IMR-90 (cell line): ENCODE measurements at regions of chr20 and their contacts with region 1.

Region 1: DNA sequence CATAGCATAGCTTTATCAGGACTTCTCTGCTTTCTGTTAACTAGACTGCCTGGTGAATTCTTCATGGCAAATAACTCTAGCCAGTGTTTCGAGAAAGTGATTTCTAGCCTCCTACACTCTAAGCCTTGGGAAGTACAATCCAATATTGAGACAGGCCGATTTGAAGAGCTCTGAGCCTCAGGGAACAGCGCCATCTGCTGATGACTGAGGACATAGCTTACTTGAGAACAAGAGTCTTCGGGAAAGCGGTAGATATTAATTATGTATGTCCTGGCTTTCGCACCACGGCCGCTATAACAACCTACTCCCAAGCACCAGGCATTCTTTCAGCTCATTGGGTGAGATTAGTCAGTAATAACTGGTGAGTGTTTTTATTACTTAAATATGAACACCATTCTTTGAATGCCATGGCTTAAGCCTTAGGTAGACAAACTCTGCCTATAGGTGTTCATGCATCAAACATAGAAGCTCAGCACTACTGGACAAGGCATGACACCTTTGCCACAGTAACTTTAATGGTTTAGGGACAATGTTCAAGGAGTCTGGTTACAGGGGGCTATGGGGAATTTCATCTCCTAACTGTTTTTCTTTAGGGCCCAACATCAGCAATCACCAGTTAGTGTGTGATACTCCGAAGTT is 518.6 kb downstream of the BMP2 start:
- DNase-seq: peak; percentile 75
- ATAC-seq: peak; percentile 80
- H3K4me3 ChIP-seq: no peak overlapping the region
- H3K27ac ChIP-seq: no peak overlapping the region
- H3K4me1 ChIP-seq: no peaks in the 10 kb centered on the region
- H3K27me3 ChIP-seq: no peaks in the 10 kb centered on the region
- CTCF ChIP-seq: peak; percentile 78
- POLR2A ChIP-seq: no peak
- RAD21 ChIP-seq: peak; percentile 66

Region 2: GRCh38 chr20:6142348-6142993 is 1143.6 kb before region 1 on chr20:
- CTCF ChIA-PET with region 1: interaction called, 3 read pairs
- POLR2A ChIA-PET with region 1: no interaction called
- dilution Hi-C with region 1: no loop called
- in situ Hi-C with region 1: loop called (anchors 10 kb)
- intact Hi-C with region 1: loop called (anchors 1 kb)
- DNase-seq: peak; percentile 65
- ATAC-seq: peak; percentile 91
- H3K4me3 ChIP-seq: no peak overlapping the region
- H3K27ac ChIP-seq: no peak overlapping the region
- H3K4me1 ChIP-seq: no peaks in the 10 kb centered on the region
- H3K27me3 ChIP-seq: peaks cover 2% of the 10 kb centered on the region; the same call in 1 of the 2 replicates
- CTCF ChIP-seq: peak; percentile 84
- POLR2A ChIP-seq: no peak
- RAD21 ChIP-seq: peak; percentile 83

Region 3: GRCh38 chr20:6583134-6583738 is 702.8 kb before region 1 on chr20:
- CTCF ChIA-PET with region 1: no interaction called
- POLR2A ChIA-PET with region 1: no interaction called
- dilution Hi-C with region 1: no loop called
- in situ Hi-C with region 1: no loop called
- intact Hi-C with region 1: loop called (anchors 5 kb)
- DNase-seq: peak; percentile 55
- ATAC-seq: peak; percentile 93
- H3K4me3 ChIP-seq: no peak overlapping the region
- H3K27ac ChIP-seq: no peak overlapping the region
- H3K4me1 ChIP-seq: peaks cover 6% of the 10 kb centered on the region
- H3K27me3 ChIP-seq: no peaks in the 10 kb centered on the region
- CTCF ChIP-seq: peak; percentile 71
- POLR2A ChIP-seq: no peak
- RAD21 ChIP-seq: peak; percentile 68

Region 4: GRCh38 chr20:6636209-6637159 is 649.6 kb before region 1 on chr20:
- CTCF ChIA-PET with region 1: no interaction called
- POLR2A ChIA-PET with region 1: no interaction called
- dilution Hi-C with region 1: no loop called
- in situ Hi-C with region 1: no loop called
- intact Hi-C with region 1: loop called (anchors 5 kb)
- DNase-seq: peak; percentile 69
- ATAC-seq: peak; percentile 87
- H3K4me3 ChIP-seq: no peak overlapping the region
- H3K27ac ChIP-seq: no peak overlapping the region
- H3K4me1 ChIP-seq: no peaks in the 10 kb centered on the region
- H3K27me3 ChIP-seq: peaks cover 8% of the 10 kb centered on the region
- CTCF ChIP-seq: peak; percentile 66
- POLR2A ChIP-seq: no peak
- RAD21 ChIP-seq: peak; percentile 64

Region 5: DNA sequence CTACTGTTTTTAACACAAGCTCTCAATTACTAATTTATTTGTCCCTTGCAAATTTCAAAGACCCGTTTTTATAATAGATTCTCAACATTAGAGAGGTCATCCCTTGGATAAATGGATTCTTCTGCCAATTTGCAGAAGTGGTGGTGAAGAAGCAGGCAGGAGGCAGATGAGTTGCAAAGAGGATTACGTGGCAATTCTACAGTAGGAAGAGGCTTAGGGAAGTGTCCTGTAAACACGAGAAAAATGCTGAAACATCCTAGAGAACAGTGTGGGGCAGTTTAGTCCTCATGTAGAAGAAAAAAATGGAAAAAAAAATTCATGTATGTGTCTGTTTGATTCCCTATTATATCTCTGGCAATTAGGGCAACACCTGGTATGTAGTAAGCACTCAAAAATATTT is 430.9 kb before region 1 on chr20:
- CTCF ChIA-PET with region 1: no interaction called
- POLR2A ChIA-PET with region 1: no interaction called
- dilution Hi-C with region 1: no loop called
- in situ Hi-C with region 1: no loop called
- intact Hi-C with region 1: no loop called
- DNase-seq: no peak
- ATAC-seq: no peak
- H3K4me3 ChIP-seq: no peak overlapping the region
- H3K27ac ChIP-seq: no peak overlapping the region
- H3K4me1 ChIP-seq: no peaks in the 10 kb centered on the region
- H3K27me3 ChIP-seq: no peaks in the 10 kb centered on the region
- CTCF ChIP-seq: no peak
- POLR2A ChIP-seq: no peak
- RAD21 ChIP-seq: no peak

Region 6: GRCh38 chr20:7272512-7272911 is 13.5 kb before region 1 on chr20:
- CTCF ChIA-PET with region 1: no interaction called
- POLR2A ChIA-PET with region 1: no interaction called
- dilution Hi-C with region 1: no loop called
- in situ Hi-C with region 1: no loop called
- intact Hi-C with region 1: no loop called
- DNase-seq: no peak
- ATAC-seq: no peak
- H3K4me3 ChIP-seq: no peak overlapping the region
- H3K27ac ChIP-seq: no peak overlapping the region
- H3K4me1 ChIP-seq: no peaks in the 10 kb centered on the region
- H3K27me3 ChIP-seq: no peaks in the 10 kb centered on the region
- CTCF ChIP-seq: no peak
- POLR2A ChIP-seq: no peak
- RAD21 ChIP-seq: no peak